Activated CD8-positive, alpha-beta memory T cell treated with anti-CD3 and anti-CD28 coated beads, Interleukin-2, amount 10 ng/mL, durations not matched to agents 7 days and 5 days (primary cell): ENCODE measurements at regions of chr6 and their contacts with region 1.

Region 1: GRCh38 chr6:106085984-106086813 is at the start of gene PRDM1:
- DNase-seq: peak; percentile 95
- ATAC-seq: peak; percentile 86
- H3K4me3 Mint-ChIP-seq: peak within 1 kb of the TSS; percentile 98
- H3K27ac Mint-ChIP-seq: peak within 1 kb of the TSS; percentile 89
- H3K4me1 Mint-ChIP-seq: peaks cover 59% of the 10 kb centered on the region
- H3K27me3 Mint-ChIP-seq: no peaks in the 10 kb centered on the region
- total RNA-seq, gene PRDM1: 97.1 to 132 TPM

Region 2: GRCh38 chr6:105733565-105734162 is 352.5 kb before region 1 on chr6:
- CTCF ChIA-PET with region 1: interaction called, 17 read pairs
- DNase-seq: no peak
- ATAC-seq: no peak
- H3K4me3 Mint-ChIP-seq: no peak overlapping the region
- H3K27ac Mint-ChIP-seq: no peak overlapping the region
- H3K4me1 Mint-ChIP-seq: peaks cover 54% of the 10 kb centered on the region
- H3K27me3 Mint-ChIP-seq: no peaks in the 10 kb centered on the region

Region 3: GRCh38 chr6:105992315-105992961 is 93.8 kb before region 1 on chr6:
- CTCF ChIA-PET with region 1: interaction called, 16 read pairs
- DNase-seq: peak; percentile 93
- ATAC-seq: peak; percentile 84
- H3K4me3 Mint-ChIP-seq: peak overlapping the region; percentile 83
- H3K27ac Mint-ChIP-seq: peak overlapping the region; percentile 94
- H3K4me1 Mint-ChIP-seq: peaks cover 65% of the 10 kb centered on the region
- H3K27me3 Mint-ChIP-seq: peaks cover 10% of the 10 kb centered on the region

Region 4: GRCh38 chr6:106098383-106099234 is 12.4 kb after region 1 on chr6:
- CTCF ChIA-PET with region 1: interaction called, 18 read pairs
- DNase-seq: peak; percentile 92
- ATAC-seq: peak; percentile 73
- H3K4me3 Mint-ChIP-seq: peak overlapping the region; percentile 90
- H3K27ac Mint-ChIP-seq: peak overlapping the region; percentile 95
- H3K4me1 Mint-ChIP-seq: peaks cover 86% of the 10 kb centered on the region
- H3K27me3 Mint-ChIP-seq: no peaks in the 10 kb centered on the region

Region 5: GRCh38 chr6:106347341-106347740 is 261.1 kb after region 1 on chr6:
- CTCF ChIA-PET with region 1: no interaction called
- DNase-seq: no peak
- ATAC-seq: no peak
- H3K4me3 Mint-ChIP-seq: no peak overlapping the region
- H3K27ac Mint-ChIP-seq: no peak overlapping the region
- H3K4me1 Mint-ChIP-seq: peaks cover 4% of the 10 kb centered on the region
- H3K27me3 Mint-ChIP-seq: peaks cover 29% of the 10 kb centered on the region